Heart left ventricle (tissue), 16 donors: ENCODE measurements at regions of chr9 and their contacts with region 1.

Region 1: DNA sequence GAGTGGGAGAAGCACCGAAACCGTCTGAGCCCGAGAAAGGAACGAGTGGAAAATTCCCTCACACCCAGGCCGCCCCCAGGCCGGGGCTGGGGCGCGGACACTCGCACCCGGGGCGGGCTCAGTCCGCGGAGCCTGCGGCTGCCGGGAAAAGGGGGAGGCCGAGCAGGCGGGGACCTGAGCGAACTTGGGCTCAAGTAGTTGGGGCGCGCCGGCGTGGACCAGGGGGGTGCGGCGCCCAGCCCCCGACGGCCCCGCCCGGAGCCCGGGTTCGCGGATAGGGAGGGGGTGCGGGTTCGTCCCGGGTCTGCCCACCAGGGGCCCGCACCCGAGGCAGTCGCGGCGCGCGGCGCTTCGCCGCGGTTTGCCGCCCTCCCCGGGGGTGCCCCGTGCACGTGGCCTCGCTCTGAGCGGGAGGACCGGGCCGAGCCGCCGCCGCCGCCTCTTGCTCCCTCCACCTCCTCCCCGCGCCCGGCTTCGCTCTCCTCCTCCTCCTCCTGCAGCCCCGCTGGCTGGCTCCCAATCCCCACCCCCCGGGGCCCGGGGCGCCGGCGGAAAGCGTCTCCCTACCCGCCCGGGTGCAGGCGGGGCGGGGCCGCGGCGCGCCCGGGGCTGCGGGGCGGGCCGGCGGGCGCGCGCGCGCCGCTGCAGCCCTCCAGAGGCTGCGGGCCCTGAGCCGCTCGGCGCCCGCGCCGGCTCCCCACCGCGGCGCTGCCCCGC is 1.1 kb upstream of the NFIB start:
- DNase-seq: peak; percentile 96 to 98 (median 97)
- ATAC-seq: peak; percentile 67 to 87 (median 80)
- H3K4me3 ChIP-seq: peak overlapping the region; percentile 66 to 90 (median 82)
- H3K27ac ChIP-seq: peak overlapping the region; percentile 93 to 100 (median 99)
- H3K4me1 ChIP-seq: peaks cover 5 to 53% (median 34%) of the 10 kb centered on the region in 12 donors
- H3K27me3 ChIP-seq: peaks cover 0 to 47% (median 0%) of the 10 kb centered on the region in 9 donors
- CTCF ChIP-seq: no peak
- POLR2A ChIP-seq: peak; percentile 40 to 82

Region 2: GRCh38 chr9:13568841-13569601 is 746.1 kb before region 1 on chr9:
- intact Hi-C with region 1: loop called in 2 of 10 experiments (anchors 5 to 10 kb)
- DNase-seq: peak in 3 of 5 donors; percentile 30 to 55 (median 34)
- ATAC-seq: peak; percentile 25 to 49 (median 29)
- H3K4me3 ChIP-seq: peak overlapping the region in 10 of 12 donors; percentile 21 to 46 (median 35)
- H3K27ac ChIP-seq: peak overlapping the region; percentile 53 to 92 (median 82)
- H3K4me1 ChIP-seq: peaks cover 0 to 46% (median 31%) of the 10 kb centered on the region in 12 donors
- H3K27me3 ChIP-seq: no peaks in the 10 kb centered on the region
- CTCF ChIP-seq: no peak
- POLR2A ChIP-seq: no peak

Region 3: DNA sequence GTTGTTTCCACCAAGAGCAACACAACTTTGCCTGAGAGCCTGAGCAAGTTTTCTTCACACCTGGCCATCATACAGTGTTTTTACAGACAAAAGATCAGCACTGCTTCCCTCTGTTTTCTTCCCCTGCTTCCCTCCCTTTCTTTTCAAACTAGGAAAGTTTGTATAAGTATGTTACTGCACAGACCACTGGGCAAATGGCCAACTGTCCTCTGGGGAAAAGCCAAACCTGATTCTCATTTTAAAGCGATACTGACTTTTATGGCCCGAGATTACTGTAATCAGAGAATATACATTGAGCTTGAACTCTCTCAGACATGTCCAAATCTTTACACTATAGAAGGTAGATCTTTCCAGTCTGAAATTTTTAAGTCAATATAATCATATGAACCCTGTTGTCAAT is 416.1 kb before region 1 on chr9:
- intact Hi-C with region 1: loop called in 1 of 10 experiments (anchors 10 kb)
- DNase-seq: peak in 4 of 5 donors; percentile 30 to 44 (median 36)
- ATAC-seq: no peak
- H3K4me3 ChIP-seq: no peak overlapping the region
- H3K27ac ChIP-seq: peak overlapping the region in 11 of 12 donors; percentile 42 to 84 (median 66)
- H3K4me1 ChIP-seq: peaks cover 6 to 66% (median 24%) of the 10 kb centered on the region in 12 donors
- H3K27me3 ChIP-seq: no peaks in the 10 kb centered on the region
- CTCF ChIP-seq: no peak
- POLR2A ChIP-seq: no peak

Region 4: DNA sequence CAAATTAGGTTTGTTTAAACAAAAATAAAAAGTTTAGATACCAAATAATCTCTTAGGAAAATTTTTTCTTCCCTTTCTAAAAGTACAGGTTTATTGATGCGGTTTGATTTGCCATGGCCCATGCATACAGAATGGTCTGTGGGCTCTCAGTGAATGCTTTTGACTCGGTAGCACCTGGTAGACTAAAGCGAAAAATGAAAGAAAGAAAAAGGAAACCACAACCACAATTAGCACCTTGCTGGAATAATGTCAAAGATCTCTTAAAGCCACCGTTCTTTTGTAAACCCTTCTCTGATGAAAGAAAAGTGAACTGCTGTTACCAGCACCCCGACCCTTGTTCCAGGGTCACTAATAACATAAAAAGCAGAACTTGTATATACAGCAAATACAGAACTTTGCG is 159.0 kb before region 1 on chr9:
- intact Hi-C with region 1: loop called in 1 of 10 experiments (anchors 10 kb)
- DNase-seq: no peak
- ATAC-seq: no peak
- H3K4me3 ChIP-seq: no peak overlapping the region
- H3K27ac ChIP-seq: peak overlapping the region in 6 of 12 donors; percentile 2 to 33 (median 15)
- H3K4me1 ChIP-seq: peaks cover 4 to 96% (median 54%) of the 10 kb centered on the region in 12 donors
- H3K27me3 ChIP-seq: no peaks in the 10 kb centered on the region
- CTCF ChIP-seq: no peak
- POLR2A ChIP-seq: no peak

Region 5: DNA sequence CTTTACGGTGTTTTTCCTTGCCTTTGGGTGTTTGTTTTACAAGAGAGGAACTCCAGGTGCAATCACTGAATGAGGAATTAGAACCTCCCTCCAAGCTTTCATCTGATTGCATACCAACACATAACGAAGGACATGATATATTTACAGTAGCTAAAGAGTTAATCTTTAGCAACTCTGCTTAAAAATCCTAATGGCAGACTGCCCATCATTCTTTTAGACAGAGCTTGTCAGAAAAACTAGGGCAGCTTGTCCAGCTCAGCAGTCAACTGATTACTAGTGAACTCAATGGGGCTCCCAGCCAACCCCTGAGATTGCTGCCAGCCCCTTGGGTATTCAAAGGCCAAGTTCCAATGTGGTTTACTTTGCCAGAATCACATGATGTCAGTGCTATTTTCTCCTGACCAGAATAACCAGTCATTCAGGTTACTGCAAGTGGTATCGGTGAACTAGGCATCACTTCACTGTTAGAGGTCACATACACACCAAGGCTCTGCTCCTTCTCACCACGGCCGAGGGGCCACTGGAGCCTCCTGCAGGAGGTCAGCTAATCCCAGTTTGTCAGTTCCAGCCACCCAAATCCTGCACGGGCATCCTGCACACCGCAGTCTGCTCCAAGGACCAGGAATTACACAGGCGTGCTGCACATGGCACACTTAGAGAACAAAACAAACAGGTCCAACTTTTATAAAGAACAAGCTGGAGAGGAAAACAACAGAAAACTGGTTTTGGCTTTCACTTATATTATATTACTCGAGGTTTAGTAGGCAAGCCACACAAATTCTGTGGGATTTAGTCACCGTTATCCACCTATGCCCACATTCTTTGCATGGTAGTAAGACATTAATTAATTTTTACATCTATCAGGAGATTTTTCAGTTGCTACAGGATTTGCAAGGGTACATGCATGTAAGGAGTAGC is 63.7 kb before region 1 on chr9:
- intact Hi-C with region 1: loop called in 3 of 10 experiments (anchors 5 kb)
- DNase-seq: peak; percentile 85 to 91 (median 88)
- ATAC-seq: peak; percentile 89 to 95 (median 94)
- H3K4me3 ChIP-seq: peak overlapping the region in 7 of 12 donors; percentile 9 to 38 (median 18)
- H3K27ac ChIP-seq: peak overlapping the region in 11 of 12 donors; percentile 51 to 76 (median 64)
- H3K4me1 ChIP-seq: peaks cover 3 to 81% (median 56%) of the 10 kb centered on the region in 12 donors
- H3K27me3 ChIP-seq: no peaks in the 10 kb centered on the region
- CTCF ChIP-seq: peak in 1 of 12 donors; percentile 9
- POLR2A ChIP-seq: no peak

Region 6: DNA sequence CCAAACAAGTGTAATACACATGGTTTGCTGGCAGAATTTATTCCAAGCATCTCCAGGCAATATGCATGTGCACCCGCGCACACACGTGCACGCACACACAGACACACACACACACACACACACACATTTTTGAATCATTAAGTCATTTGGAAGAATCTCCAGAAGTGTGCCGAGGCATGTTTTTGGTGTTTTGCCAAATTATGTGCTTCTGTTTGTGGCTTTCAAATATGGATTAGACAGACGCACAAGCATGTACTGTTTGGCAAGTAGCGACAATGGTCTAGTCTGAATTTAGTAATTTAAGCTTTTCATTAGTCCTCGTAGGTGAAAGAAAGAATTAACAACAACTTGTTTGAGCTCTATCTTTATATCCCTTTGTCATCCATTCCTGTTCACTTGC is 37.8 kb before region 1 on chr9:
- intact Hi-C with region 1: loop called in 4 of 10 experiments (anchors 5 kb)
- DNase-seq: peak in 2 of 5 donors; percentile 29 to 39
- ATAC-seq: peak; percentile 32 to 62 (median 43)
- H3K4me3 ChIP-seq: peak overlapping the region in 3 of 12 donors; percentile 4 to 20 (median 7)
- H3K27ac ChIP-seq: peak overlapping the region in 11 of 12 donors; percentile 21 to 75 (median 52)
- H3K4me1 ChIP-seq: peaks cover 11 to 99% (median 76%) of the 10 kb centered on the region in 12 donors
- H3K27me3 ChIP-seq: no peaks in the 10 kb centered on the region
- CTCF ChIP-seq: no peak
- POLR2A ChIP-seq: no peak